Activated CD4-positive, alpha-beta memory T cell treated with anti-CD3 and anti-CD28 coated beads for 36 hours (primary cell): ENCODE measurements at regions of chr21 and their contacts with region 1.

Region 1: DNA sequence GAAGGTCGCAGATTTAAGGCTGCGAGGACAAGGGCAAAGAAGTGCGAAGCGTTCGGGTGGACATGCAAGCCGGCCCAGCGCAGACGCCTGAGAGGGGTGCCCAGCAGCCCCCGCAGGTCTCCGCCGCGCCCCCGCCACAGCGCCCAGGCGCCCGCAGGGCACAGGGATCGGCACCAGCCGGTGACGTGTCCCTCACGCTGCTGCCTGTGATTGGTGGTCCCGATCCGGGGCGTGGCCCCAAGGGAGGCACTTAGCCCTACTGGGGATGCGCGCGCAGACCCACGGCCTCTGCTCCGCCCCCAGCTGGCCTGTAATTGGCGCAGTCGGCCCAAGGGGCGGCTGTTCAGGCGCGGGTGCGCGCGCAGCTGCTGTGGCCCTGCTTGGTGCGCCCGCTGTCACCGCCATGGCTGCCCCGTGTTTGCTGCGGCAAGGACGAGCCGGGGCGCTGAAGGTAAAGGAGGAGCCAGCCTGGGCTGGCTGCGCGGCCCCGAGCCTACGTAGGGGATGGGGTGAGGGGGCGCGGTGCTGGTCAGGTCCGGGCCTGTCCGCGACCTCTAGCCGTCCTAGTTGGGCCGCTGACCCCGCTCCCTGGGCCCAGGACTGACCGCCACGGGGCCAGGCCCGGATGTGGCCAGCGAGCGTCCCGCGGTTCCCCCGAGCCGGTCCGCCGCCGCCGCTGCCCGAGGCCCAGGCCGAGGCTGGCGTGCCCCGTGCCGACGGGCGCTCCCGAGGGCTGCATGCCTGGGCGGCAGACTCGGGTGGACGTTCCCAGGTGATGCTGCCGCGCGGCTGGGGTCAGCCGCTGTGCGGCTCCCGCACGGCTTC is at the start of gene NDUFV3:
- DNase-seq: peak; percentile 100
- H3K4me3 Mint-ChIP-seq: peak within 1 kb of the TSS; percentile 87
- H3K27ac Mint-ChIP-seq: peak within 1 kb of the TSS; percentile 89
- H3K4me1 Mint-ChIP-seq: peaks cover 13% of the 10 kb centered on the region
- H3K27me3 Mint-ChIP-seq: no peaks in the 10 kb centered on the region
- total RNA-seq, gene NDUFV3: 16.1 to 17.3 TPM

Region 2: GRCh38 chr21:42737951-42738590 is 155.1 kb before region 1 on chr21:
- CTCF ChIA-PET with region 1: no interaction called
- POLR2A ChIA-PET with region 1: no interaction called
- intact Hi-C with region 1: no loop called
- DNase-seq: peak; percentile 12
- H3K4me3 Mint-ChIP-seq: no peak overlapping the region
- H3K27ac Mint-ChIP-seq: peak overlapping the region; percentile 86
- H3K4me1 Mint-ChIP-seq: peaks cover 22% of the 10 kb centered on the region
- H3K27me3 Mint-ChIP-seq: no peaks in the 10 kb centered on the region

Region 3: GRCh38 chr21:42878993-42879787 is 14.0 kb before region 1 on chr21 and contains the start of gene WDR4:
- CTCF ChIA-PET with region 1: interaction called, 5 read pairs
- POLR2A ChIA-PET with region 1: interaction called, 25 read pairs
- intact Hi-C with region 1: loop called (anchors 1 kb)
- DNase-seq: peak; percentile 100
- H3K4me3 Mint-ChIP-seq: peak within 1 kb of the TSS; percentile 99
- H3K27ac Mint-ChIP-seq: peak within 1 kb of the TSS; percentile 98
- H3K4me1 Mint-ChIP-seq: peaks cover 32% of the 10 kb centered on the region
- H3K27me3 Mint-ChIP-seq: no peaks in the 10 kb centered on the region
- total RNA-seq, gene WDR4: 39.8 to 39.9 TPM

Region 4: DNA sequence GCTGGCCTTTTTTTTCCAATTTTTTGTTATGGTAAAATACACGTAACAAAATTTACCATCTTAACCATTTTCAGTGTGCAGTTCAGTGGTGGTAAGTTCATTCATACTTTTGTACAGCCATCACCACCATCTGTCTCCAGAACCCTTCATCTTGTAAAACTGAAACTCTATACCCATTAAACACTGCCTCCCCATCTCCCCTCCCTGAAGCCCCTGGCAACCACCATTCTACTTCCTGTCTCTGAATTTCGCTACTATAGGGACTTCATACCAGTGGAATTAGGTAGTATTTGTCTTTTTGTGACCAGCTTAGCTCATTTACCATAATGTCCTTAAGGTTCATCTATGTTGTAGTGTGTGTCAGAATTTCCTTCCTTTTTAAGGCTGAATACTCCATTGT is 90.0 kb after region 1 on chr21:
- CTCF ChIA-PET with region 1: no interaction called
- POLR2A ChIA-PET with region 1: no interaction called
- intact Hi-C with region 1: no loop called
- DNase-seq: peak; percentile 21
- H3K4me3 Mint-ChIP-seq: no peak overlapping the region
- H3K27ac Mint-ChIP-seq: peak overlapping the region; percentile 54
- H3K4me1 Mint-ChIP-seq: peaks cover 26% of the 10 kb centered on the region
- H3K27me3 Mint-ChIP-seq: no peaks in the 10 kb centered on the region

Region 5: GRCh38 chr21:43789276-43790009 is 896.3 kb after region 1 on chr21 and contains the start of gene RRP1:
- CTCF ChIA-PET with region 1: no interaction called
- POLR2A ChIA-PET with region 1: no interaction called
- intact Hi-C with region 1: loop called (anchors 10 kb)
- DNase-seq: peak; percentile 94
- H3K4me3 Mint-ChIP-seq: peak within 1 kb of the TSS; percentile 97
- H3K27ac Mint-ChIP-seq: peak within 1 kb of the TSS; percentile 84
- H3K4me1 Mint-ChIP-seq: peaks cover 24% of the 10 kb centered on the region
- H3K27me3 Mint-ChIP-seq: no peaks in the 10 kb centered on the region
- total RNA-seq, gene RRP1: 42.7 to 47.8 TPM